Activated B cell treated with CpG ODN at 0.5 μM for 24 hours (primary cell): ENCODE measurements at regions of chr11 and their contacts with region 1.

Region 1: GRCh38 chr11:16945671-16946469 is 68.3 kb downstream of the PLEKHA7 start:
- DNase-seq: no peak
- ATAC-seq: peak; percentile 77
- H3K4me3 Mint-ChIP-seq: peak overlapping the region; percentile 61
- H3K27ac Mint-ChIP-seq: peak overlapping the region; percentile 57
- H3K4me1 Mint-ChIP-seq: peaks cover 17% of the 10 kb centered on the region
- H3K27me3 Mint-ChIP-seq: no peaks in the 10 kb centered on the region
- CTCF ChIP-seq: no peak

Region 2: GRCh38 chr11:16924826-16925560 is 20.9 kb before region 1 on chr11:
- CTCF ChIA-PET with region 1: no interaction called
- POLR2A ChIA-PET with region 1: no interaction called
- intact Hi-C with region 1: loop called (anchors 1 kb)
- DNase-seq: no peak
- ATAC-seq: peak; percentile 16
- H3K4me3 Mint-ChIP-seq: peak overlapping the region; percentile 82
- H3K27ac Mint-ChIP-seq: peak overlapping the region; percentile 62
- H3K4me1 Mint-ChIP-seq: peaks cover 28% of the 10 kb centered on the region
- H3K27me3 Mint-ChIP-seq: peaks cover 18% of the 10 kb centered on the region
- CTCF ChIP-seq: no peak

Region 3: DNA sequence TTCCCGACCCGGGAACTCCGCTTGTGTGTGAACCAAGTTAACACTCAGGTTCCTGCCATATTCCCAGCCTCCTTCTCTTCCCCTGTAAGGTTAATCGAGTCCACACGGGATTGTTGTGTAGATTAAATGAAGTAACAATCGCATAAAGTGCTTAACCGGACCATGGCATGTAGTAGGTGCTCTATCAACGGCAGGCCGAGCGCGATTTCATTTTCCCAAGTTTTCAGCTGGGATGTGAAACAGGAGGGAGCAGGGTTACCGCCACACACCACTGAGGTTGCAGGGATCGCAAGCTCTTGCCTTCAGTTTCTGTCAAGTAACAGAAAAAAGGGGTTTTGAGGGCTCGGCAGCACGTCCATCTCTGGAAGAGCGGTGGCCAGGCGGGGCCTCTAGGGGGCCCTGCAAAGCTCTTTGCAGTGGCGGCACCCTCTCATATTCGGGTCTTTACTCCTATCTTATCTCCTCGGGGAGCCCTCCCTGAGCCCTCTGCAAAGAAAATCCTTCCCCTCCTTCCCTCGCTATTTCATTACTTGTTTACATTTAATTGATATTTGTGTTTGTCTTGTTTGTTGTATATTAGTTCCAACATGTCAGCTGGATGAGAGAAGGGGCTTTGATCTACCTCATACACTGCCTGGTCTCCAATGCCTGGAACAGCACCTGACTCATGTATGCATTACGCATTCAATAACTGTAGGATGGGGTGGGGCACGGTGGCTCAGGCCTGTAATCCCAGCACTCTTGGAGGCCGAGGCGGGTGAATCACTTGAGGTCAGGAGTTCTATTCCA is 69.2 kb after region 1 on chr11:
- CTCF ChIA-PET with region 1: no interaction called
- POLR2A ChIA-PET with region 1: no interaction called
- intact Hi-C with region 1: loop called (anchors 5 kb)
- DNase-seq: no peak
- ATAC-seq: peak; percentile 47
- H3K4me3 Mint-ChIP-seq: peak overlapping the region; percentile 89
- H3K27ac Mint-ChIP-seq: peak overlapping the region; percentile 27
- H3K4me1 Mint-ChIP-seq: peaks cover 8% of the 10 kb centered on the region
- H3K27me3 Mint-ChIP-seq: peaks cover 16% of the 10 kb centered on the region
- CTCF ChIP-seq: no peak

Region 4: GRCh38 chr11:17389211-17389956 is 443.5 kb after region 1 on chr11:
- CTCF ChIA-PET with region 1: interaction called, 5 read pairs
- POLR2A ChIA-PET with region 1: no interaction called
- intact Hi-C with region 1: loop called (anchors 5 kb)
- DNase-seq: peak; percentile 85
- ATAC-seq: peak; percentile 90
- H3K4me3 Mint-ChIP-seq: peak overlapping the region; percentile 84
- H3K27ac Mint-ChIP-seq: peak overlapping the region; percentile 59
- H3K4me1 Mint-ChIP-seq: peaks cover 18% of the 10 kb centered on the region
- H3K27me3 Mint-ChIP-seq: no peaks in the 10 kb centered on the region
- CTCF ChIP-seq: no peak